ENCODE measurements at regions of chr1 and their contacts with region 1.

Region 1: DNA sequence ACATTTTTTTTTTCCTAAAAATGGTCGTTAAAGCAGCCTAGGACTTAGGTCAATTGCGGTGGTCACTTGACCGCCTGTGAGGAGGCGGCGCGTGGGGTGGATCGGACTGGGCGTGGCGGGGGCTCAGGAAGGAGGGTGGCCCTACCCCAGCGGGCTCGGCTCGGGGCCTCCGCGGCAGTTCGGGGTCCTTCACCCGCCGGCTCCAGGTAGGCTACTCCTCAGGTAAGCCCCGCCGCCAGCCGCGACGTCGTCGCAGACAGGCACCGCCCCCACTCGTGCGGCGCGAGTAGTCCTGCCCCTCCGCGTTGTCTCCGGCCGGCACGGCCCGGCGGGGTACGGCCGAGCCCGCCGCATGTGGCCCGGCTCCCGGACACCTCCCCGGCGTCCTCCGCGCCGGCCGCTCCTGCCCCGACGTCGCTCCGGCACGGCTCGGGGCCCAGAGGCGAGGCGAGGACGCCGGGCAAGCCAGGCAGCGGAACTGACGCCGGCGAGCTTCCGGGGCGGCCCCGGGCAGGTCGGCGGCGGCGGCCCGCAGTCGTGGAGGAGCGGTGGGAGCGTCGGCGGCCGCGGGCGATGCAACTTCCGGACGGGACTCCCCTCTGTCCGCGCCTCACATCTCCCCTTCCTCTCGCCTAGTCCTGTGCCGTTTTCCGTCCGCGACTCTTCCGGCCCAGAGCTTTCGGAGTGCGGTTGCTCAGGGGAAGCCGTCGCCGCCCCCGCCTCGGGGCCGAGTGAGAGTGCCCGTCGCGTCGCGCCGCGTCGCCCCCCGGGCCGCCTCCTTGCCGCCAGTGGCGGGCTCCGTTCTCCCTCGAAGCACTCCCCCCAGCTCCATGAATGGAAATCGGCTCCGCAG is at the start of gene AGO3:
- DNase-seq: peak; percentile 92
- H3K4me3 ChIP-seq: peak within 1 kb of the TSS; percentile 88 to 92 (median 90)
- H3K27ac ChIP-seq: peak within 1 kb of the TSS; percentile 96 to 100 (median 98)
- H3K4me1 ChIP-seq: peaks cover 0 to 44% (median 23%) of the 10 kb centered on the region in 4 donors
- H3K27me3 ChIP-seq: no peaks in the 10 kb centered on the region
- CTCF ChIP-seq: no peak
- EP300 ChIP-seq: peak in 1 of 4 donors; percentile 9
- POLR2A ChIP-seq: peak in 1 of 2 donors; percentile 25
- total RNA-seq, gene AGO3: 18.5 to 27.4 (median 19.3) TPM

Region 2: DNA sequence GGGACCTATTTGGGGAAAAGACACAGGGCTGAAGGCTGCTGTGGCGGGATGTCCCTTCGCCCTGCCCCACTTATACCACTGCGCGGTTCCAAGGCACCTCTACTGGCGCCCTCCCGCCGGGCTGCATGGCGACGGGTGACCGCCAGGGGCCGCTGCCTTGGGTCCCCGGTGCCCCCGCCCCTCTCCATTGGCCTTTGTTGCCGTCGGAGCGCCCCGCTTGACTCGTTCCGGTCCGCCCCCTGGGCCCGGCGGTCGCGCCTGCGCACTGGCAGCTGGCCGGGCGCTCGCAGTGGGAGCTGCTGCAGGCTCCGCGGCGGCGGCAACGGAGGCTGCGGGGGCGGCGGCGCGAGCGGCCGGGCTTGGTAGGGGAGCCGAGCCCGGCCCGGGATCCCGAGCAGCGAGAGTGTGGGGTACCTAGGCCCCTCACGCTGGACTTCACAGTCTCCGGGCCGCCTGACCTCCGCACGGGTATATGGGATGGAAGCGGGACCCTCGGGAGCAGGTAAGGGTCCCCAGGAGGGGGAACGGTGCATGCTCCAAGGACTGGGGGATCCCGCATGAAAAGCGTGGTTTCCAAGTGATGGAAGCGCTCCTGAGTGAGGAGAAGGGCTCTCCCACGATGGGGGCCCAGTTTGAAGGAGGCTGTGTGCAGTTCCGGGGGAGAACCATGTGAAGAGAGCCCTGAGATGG is 47.7 kb before region 1 on chr1 and contains the start of gene AGO1:
- intact Hi-C with region 1: loop called (anchors 2 kb)
- DNase-seq: peak; percentile 97
- H3K4me3 ChIP-seq: peak within 1 kb of the TSS; percentile 94 to 100 (median 95)
- H3K27ac ChIP-seq: peak within 1 kb of the TSS; percentile 80 to 91 (median 84)
- H3K4me1 ChIP-seq: peaks cover 0 to 48% (median 28%) of the 10 kb centered on the region in 4 donors
- H3K27me3 ChIP-seq: no peaks in the 10 kb centered on the region
- CTCF ChIP-seq: peak; percentile 83 to 98 (median 86)
- EP300 ChIP-seq: no peak
- POLR2A ChIP-seq: peak in 1 of 2 donors; percentile 37
- total RNA-seq, gene AGO1: 17.1 to 26.3 (median 19.6) TPM

Region 3: DNA sequence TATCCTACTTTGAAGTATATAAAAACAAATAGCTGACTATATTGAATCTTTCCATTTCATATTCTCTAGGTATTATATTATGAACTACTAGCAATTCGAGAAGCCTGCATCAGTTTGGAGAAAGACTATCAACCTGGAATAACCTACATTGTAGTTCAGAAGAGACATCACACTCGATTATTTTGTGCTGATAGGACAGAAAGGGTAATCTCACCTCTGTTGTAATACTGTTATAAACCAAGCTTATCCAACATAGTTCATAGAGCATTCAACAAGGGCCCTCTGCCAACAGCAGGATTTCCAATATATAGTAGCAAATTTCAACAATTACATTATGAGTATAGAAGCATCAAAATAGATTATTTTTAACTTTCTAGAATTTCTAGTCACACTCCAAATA is 109.4 kb after region 1 on chr1:
- intact Hi-C with region 1: no loop called
- DNase-seq: no peak
- H3K4me3 ChIP-seq: no peak overlapping the region
- H3K27ac ChIP-seq: no peak overlapping the region
- H3K4me1 ChIP-seq: no peaks in the 10 kb centered on the region
- H3K27me3 ChIP-seq: no peaks in the 10 kb centered on the region
- CTCF ChIP-seq: no peak
- EP300 ChIP-seq: no peak
- POLR2A ChIP-seq: no peak

Region 4: DNA sequence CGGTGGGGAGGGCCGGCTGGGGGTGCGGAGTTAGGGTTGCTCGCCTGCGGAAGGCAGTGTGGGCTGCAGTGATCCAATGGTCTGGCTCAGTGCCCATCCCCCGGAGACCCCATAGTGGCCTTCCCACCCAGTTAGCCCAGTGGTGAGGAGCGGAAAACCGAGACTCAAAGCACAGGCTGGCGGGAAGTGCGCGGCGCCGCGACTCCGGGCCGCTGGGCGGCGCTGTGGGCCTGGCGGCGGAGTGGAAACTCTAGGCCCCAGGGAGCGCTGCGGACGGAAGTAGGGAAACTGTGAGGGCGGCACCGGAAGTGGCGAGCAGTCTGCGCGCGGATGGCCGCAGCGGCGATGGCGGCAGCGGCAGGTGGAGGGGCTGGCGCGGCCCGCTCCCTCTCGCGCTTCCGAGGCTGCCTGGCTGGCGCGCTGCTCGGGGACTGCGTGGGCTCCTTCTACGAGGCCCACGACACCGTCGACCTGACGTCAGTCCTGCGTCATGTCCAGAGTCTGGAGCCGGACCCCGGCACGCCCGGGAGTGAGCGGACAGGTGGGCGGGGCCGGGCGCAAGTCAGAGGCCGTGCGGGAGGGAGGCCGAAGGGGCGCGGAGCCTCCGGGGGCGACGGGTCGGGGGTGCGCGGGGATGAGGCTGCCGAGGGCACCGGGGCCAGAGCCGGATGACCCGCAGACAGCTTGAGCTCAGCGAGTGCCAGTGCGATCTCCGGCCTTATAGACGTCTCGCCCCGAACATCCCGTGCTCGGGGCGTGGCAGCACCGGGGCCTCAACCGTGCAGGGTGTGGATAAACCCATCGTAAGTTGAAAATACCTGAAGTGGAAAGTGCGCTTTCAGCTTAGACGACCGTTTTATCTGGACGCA is 158.0 kb after region 1 on chr1 and contains the start of gene ADPRS:
- intact Hi-C with region 1: loop called (anchors 5 kb)
- DNase-seq: peak; percentile 94
- H3K4me3 ChIP-seq: peak within 1 kb of the TSS; percentile 86 to 96 (median 94)
- H3K27ac ChIP-seq: peak within 1 kb of the TSS; percentile 88 to 92 (median 90)
- H3K4me1 ChIP-seq: peaks cover 0 to 42% (median 32%) of the 10 kb centered on the region in 4 donors
- H3K27me3 ChIP-seq: peaks cover 0 to 8% (median 0%) of the 10 kb centered on the region in 3 donors
- CTCF ChIP-seq: peak; percentile 99
- EP300 ChIP-seq: peak in 1 of 4 donors; percentile 49
- POLR2A ChIP-seq: peak; percentile 70 to 85
- total RNA-seq, gene ADPRS: 24.3 to 49.6 (median 37.0) TPM